ENCODE measurements at regions of chr6 and their contacts with region 1.

Region 1: GRCh38 chr6:56708810-56709597 is 66.3 kb upstream of the DST start:
- DNase-seq: no peak
- ATAC-seq: no peak
- H3K4me3 Mint-ChIP-seq: no peak overlapping the region
- H3K27ac Mint-ChIP-seq: no peak overlapping the region
- H3K4me1 Mint-ChIP-seq: no peaks in the 10 kb centered on the region
- H3K27me3 Mint-ChIP-seq: no peaks in the 10 kb centered on the region
- CTCF ChIP-seq: no peak

Region 2: GRCh38 chr6:56851541-56852259 is 142.7 kb after region 1 on chr6:
- CTCF ChIA-PET with region 1: no interaction called
- POLR2A ChIA-PET with region 1: no interaction called
- intact Hi-C with region 1: loop called (anchors 5 kb)
- DNase-seq: no peak
- ATAC-seq: peak; percentile 54
- H3K4me3 Mint-ChIP-seq: peak overlapping the region; percentile 64
- H3K27ac Mint-ChIP-seq: no peak overlapping the region
- H3K4me1 Mint-ChIP-seq: peaks cover 16% of the 10 kb centered on the region
- H3K27me3 Mint-ChIP-seq: peaks cover 41% of the 10 kb centered on the region
- CTCF ChIP-seq: no peak

Region 3: GRCh38 chr6:57006131-57006737 is 297.2 kb after region 1 on chr6:
- CTCF ChIA-PET with region 1: no interaction called
- POLR2A ChIA-PET with region 1: no interaction called
- intact Hi-C with region 1: no loop called
- DNase-seq: no peak
- ATAC-seq: no peak
- H3K4me3 Mint-ChIP-seq: no peak overlapping the region
- H3K27ac Mint-ChIP-seq: no peak overlapping the region
- H3K4me1 Mint-ChIP-seq: no peaks in the 10 kb centered on the region
- H3K27me3 Mint-ChIP-seq: peaks cover 11% of the 10 kb centered on the region
- CTCF ChIP-seq: no peak